Mucosa of descending colon (tissue), 3 donors: ENCODE measurements at regions of chr4 and their contacts with region 1.

Region 1: GRCh38 chr4:147019061-147019460 is 73.4 kb upstream of the TTC29 start:
- DNase-seq: peak in 2 of 3 donors; percentile 55 to 80
- ATAC-seq: peak; percentile 65
- H3K4me3 ChIP-seq: no peak overlapping the region
- H3K4me1 ChIP-seq: no peaks in the 10 kb centered on the region
- CTCF ChIP-seq: no peak

Region 2: DNA sequence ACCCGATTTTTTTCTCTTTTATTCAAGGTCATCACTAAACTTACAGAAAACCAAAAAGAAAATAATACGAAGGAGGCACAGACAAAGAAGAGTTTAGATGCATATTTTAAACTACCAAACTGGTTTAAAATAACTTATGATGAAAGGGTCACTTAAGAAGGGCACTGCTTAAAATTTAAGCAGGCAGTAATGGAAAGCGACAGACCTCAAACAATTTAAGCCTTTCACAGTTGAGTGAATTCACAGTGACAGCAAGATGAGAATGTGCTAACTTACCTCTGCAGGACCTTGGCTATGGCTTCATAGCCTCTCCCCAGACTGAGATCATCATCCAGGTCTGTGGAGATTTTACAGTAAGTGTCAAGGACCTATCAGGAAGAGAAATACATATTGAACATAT is 185.5 kb before region 1 on chr4:
- intact Hi-C with region 1: no loop called
- DNase-seq: no peak
- ATAC-seq: no peak
- H3K4me3 ChIP-seq: no peak overlapping the region
- H3K4me1 ChIP-seq: no peaks in the 10 kb centered on the region
- CTCF ChIP-seq: no peak

Region 3: DNA sequence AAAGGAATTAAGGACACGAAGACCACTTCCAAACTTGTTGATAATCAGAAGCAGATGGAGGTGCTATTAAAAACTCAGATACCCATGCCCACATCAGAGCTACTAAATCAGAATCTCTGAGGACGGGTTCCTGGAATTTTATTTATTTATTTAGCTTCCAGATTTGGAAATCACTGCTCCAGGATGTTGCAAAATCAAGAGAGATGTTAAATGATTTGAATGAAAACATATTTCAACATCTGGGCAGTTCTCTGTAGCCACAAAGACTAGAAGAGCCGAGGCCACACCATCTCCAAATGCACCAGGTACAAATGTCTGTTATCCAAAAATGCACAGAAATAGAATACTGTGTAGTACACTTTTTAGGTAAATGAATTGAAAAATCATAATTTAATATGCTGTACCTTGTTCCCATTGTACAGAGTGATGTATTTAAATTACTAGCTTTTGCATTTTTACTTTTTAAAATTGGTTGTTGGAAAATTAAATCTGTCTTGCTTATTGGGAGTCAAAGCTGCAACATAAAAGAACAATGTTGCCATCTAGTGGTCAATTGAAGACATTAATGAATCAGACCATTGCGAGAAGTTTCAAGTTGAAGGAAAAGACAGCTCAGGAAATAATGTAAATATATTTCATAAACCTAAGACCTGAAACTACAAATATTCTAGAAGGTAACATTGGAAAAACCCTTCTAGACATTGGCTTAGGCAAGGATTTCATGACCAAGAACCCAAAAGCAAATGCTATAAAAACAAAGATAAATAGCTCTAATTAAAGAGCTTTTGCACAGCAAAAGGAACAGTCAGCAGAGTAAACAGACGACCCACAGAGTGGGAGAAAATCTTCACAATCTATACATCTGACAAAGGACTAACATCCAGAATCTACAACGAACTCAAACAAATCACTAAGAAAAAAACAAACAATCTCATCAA is 77.9 kb after region 1 on chr4:
- intact Hi-C with region 1: loop called in 1 of 2 experiments (anchors 5 kb)
- DNase-seq: no peak
- ATAC-seq: no peak
- H3K4me3 ChIP-seq: no peak overlapping the region
- H3K4me1 ChIP-seq: no peaks in the 10 kb centered on the region
- CTCF ChIP-seq: peak; percentile 37